CD8-positive, alpha-beta T cell (primary cell): ENCODE measurements at regions of chr5 and their contacts with region 1.

Region 1: DNA sequence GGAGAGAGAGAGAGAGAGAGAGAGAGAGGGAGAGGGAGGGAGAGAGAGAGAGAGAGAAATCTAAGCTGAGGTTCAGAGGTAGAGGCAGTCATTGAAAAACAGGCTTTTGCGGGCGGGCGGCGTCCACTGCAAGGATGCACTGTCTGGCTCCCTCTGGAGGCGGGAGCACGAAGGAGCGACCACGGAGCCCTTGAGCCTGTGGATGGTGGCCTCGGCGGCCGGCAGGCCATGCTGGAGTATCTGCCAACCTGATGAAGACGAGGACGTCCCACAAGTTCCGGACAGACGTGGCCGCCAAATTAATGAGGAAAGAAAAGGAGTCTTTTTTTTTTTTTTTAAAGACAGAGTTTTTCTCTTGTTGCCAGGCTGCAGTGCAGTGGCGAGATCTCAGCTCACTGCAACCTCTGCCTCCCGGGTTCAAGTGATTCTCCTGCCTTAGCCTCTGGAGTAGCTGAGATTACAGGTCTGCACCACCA is 2.2 kb upstream of the CCDC125 start:
- DNase-seq: peak; percentile 48 to 83 (median 74)
- ATAC-seq: peak; percentile 71
- H3K4me3 ChIP-seq: no peak overlapping the region
- H3K4me3 Mint-ChIP-seq: no peak overlapping the region
- H3K27ac ChIP-seq: no peak overlapping the region
- H3K27ac Mint-ChIP-seq: peak overlapping the region; percentile 35
- H3K4me1 ChIP-seq: peaks cover 22% of the 10 kb centered on the region
- H3K4me1 Mint-ChIP-seq: peaks cover 23% of the 10 kb centered on the region
- H3K27me3 ChIP-seq: no peaks in the 10 kb centered on the region
- H3K27me3 Mint-ChIP-seq: no peaks in the 10 kb centered on the region
- CTCF ChIP-seq: peak; percentile 72

Region 2: DNA sequence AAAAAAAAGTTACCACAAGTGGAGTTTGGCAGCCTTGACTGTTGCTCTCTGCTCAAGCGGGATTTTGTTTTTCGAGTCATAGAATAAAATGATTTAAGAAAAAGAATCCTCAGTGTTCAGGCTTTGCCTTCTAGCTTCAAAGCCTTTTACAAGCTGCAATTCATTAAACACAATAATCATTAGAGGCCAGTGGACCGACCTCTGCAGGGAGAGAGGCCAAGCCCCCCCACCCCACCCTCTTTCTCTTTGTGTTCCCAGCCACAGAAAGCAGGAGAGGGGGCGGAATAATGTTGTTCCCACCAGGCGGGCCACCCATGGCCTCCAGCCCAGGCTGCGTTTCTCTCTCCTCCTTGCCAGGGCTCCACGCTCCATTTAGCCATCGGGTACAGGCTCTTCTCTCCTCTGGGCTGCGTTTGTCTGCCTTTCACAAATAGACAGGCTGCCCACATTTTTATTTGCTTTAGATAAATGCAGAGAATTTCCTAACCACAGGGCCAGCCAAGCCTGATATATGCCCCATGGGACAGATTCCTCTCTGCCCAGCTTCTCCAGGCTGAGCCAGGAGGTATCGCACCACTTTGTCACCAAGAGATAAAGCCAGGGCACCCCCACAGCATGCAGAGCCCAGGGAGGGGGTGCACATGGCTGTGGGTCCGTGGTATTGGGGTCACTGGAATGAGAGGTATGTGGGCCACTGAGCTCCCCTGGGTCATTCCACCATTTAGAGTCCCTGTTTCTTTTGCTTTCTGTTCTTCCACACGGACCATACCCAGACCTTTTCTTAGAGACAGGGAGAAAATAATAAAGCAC is 800.5 kb before region 1 on chr5:
- CTCF ChIA-PET with region 1: no interaction called
- POLR2A ChIA-PET with region 1: no interaction called
- intact Hi-C with region 1: no loop called
- DNase-seq: no peak
- ATAC-seq: no peak
- H3K4me3 ChIP-seq: no peak overlapping the region
- H3K4me3 Mint-ChIP-seq: no peak overlapping the region
- H3K27ac ChIP-seq: no peak overlapping the region
- H3K27ac Mint-ChIP-seq: no peak overlapping the region
- H3K4me1 ChIP-seq: no peaks in the 10 kb centered on the region
- H3K4me1 Mint-ChIP-seq: no peaks in the 10 kb centered on the region
- H3K27me3 ChIP-seq: peaks cover 0 to 2% of the 10 kb centered on the region in 2 experiments
- H3K27me3 Mint-ChIP-seq: peaks cover 17% of the 10 kb centered on the region
- CTCF ChIP-seq: no peak

Region 3: DNA sequence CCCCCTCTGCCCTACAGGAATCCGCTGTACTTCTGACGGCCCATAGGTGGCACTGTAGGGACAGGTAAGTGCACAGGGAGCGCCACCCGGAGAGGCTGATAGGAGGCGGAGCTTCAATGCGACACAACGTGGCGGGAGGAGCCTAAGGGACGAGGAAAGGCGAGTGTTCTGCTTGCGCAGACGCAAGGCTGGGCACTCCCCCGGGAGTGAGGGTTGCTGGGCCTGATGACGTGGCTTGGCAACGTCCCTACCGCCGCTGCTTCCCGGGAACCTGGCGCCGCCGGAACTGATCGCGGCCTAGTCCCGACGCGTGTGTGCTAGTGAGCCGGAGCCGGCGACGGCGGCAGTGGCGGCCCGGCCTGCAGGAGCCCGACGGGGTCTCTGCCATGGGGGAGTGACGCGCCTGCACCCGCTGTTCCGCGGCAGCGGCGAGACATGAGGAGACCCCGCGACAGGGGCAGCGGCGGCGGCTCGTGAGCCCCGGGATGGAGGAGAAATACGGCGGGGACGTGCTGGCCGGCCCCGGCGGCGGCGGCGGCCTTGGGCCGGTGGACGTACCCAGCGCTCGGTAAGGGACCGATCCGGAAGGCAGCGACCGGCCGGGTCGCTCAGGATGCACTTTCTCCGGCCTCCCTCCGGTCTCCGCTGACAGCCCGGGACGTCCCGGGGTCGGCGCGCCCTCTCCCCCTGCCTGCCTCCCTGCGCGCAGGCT is 240.9 kb before region 1 on chr5 and contains the start of gene SLC30A5:
- CTCF ChIA-PET with region 1: interaction called, 23 read pairs
- POLR2A ChIA-PET with region 1: interaction called, 3 read pairs
- intact Hi-C with region 1: loop called (anchors 1 to 2 kb)
- DNase-seq: peak; percentile 96 to 100 (median 98)
- ATAC-seq: peak; percentile 98
- H3K4me3 ChIP-seq: peak within 1 kb of the TSS; percentile 67 to 69
- H3K4me3 Mint-ChIP-seq: peak within 1 kb of the TSS; percentile 91
- H3K27ac ChIP-seq: peak within 1 kb of the TSS; percentile 92 to 93
- H3K27ac Mint-ChIP-seq: peak within 1 kb of the TSS; percentile 95
- H3K4me1 ChIP-seq: peaks cover 20% of the 10 kb centered on the region
- H3K4me1 Mint-ChIP-seq: peaks cover 36% of the 10 kb centered on the region
- H3K27me3 ChIP-seq: no peaks in the 10 kb centered on the region
- H3K27me3 Mint-ChIP-seq: no peaks in the 10 kb centered on the region
- CTCF ChIP-seq: peak; percentile 76
- total RNA-seq, gene SLC30A5: 14.5 to 18.5 TPM

Region 4: DNA sequence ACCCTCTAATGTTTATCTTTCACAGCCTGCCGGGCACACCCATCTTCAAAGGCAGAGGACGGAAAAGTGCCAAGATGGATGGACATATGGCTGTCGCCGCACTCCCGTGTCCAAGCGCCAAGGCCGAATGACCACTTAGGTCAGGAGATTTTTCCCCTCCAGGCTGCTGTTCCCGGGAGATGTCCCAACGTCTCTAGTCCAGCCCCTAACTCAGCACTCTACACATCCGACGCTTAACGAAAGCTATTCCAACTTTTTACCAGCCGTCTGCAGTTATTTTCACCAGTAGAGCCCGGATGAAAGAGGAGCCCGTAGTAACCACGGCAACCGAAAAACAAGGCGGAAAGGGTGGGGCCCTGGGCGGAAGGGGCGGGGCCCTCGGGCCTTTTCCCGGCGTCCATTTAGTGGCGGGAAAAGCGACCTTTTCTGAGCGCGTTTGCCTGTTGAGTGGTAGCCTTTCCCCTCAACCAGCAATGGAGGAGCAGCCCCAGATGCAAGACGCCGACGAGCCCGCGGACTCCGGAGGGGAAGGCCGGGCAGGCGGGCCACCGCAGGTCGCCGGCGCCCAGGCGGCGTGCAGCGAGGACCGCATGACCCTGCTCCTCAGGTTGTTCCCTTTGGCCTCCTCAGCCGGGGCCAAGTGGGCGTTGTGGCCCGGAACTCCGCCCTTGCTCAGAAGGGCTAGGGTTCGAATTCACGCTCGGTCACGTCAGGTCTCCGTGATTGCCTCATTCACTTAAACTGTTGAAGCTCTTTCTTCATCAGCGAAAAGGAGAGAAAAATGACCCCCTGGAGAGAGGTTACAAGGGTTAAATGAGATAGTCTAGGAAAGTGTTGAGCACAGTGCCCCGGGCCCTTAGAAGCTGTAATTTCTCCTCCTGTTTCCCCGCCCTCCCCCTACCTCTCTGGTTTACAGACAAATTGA is 145.4 kb before region 1 on chr5 and contains the start of gene CENPH:
- CTCF ChIA-PET with region 1: no interaction called
- POLR2A ChIA-PET with region 1: no interaction called
- intact Hi-C with region 1: loop called in 1 of 2 experiments (anchors 1 kb)
- DNase-seq: peak; percentile 82 to 93 (median 90)
- ATAC-seq: peak; percentile 94
- H3K4me3 ChIP-seq: peak within 1 kb of the TSS; percentile 75 to 77
- H3K4me3 Mint-ChIP-seq: peak within 1 kb of the TSS; percentile 91
- H3K27ac ChIP-seq: peak within 1 kb of the TSS; percentile 66 to 73
- H3K27ac Mint-ChIP-seq: peak within 1 kb of the TSS; percentile 84
- H3K4me1 ChIP-seq: peaks cover 10% of the 10 kb centered on the region
- H3K4me1 Mint-ChIP-seq: peaks cover 16% of the 10 kb centered on the region
- H3K27me3 ChIP-seq: no peaks in the 10 kb centered on the region
- H3K27me3 Mint-ChIP-seq: no peaks in the 10 kb centered on the region
- CTCF ChIP-seq: no peak
- total RNA-seq, gene CENPH: 4.1 to 4.6 TPM

Region 5: DNA sequence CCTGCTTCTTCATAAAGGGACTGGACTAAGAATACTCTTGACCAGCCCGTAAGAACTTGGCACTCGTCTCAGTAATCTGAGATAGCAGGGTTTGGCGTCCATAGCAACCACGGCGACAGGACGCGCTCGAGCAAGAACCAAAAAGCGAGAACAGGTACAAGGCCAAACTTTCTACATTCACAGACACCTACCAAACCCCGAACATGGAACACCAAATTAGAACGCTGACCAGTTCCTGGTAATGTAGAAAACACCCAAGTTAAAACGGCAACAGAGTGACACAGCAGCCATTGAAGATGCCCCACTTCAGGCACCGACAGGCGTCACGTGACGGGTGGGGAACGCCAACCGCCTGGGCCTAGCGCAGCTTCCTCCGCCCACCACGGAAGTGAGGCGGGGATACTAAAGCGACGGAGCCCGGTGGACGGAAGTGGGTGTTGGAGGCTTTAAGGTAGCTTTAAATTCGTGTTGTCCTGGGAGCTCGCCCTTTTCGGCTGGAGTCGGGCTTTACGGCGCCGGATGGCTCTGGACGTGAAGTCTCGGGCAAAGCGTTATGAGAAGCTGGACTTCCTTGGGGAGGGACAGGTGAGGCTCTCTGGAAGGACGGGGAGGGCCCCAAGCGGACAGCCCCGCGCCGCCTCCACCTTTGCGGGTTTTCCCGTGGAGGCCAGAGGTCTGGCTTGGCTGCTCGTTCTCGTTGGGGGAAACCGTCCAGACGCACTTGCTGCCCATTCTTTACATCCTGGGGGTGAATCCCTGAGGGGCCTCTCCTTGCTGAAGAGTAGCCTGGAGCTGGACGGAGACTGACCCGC is 100.2 kb before region 1 on chr5 and contains the start of gene CDK7:
- CTCF ChIA-PET with region 1: interaction called, 5 read pairs
- POLR2A ChIA-PET with region 1: interaction called, 3 read pairs
- intact Hi-C with region 1: loop called (anchors 1 to 10 kb)
- DNase-seq: peak; percentile 83 to 96 (median 92)
- ATAC-seq: peak; percentile 99
- H3K4me3 ChIP-seq: peak within 1 kb of the TSS; percentile 71 to 98
- H3K4me3 Mint-ChIP-seq: peak within 1 kb of the TSS; percentile 94
- H3K27ac ChIP-seq: peak within 1 kb of the TSS; percentile 67 to 85
- H3K27ac Mint-ChIP-seq: peak within 1 kb of the TSS; percentile 89
- H3K4me1 ChIP-seq: peaks cover 20% of the 10 kb centered on the region
- H3K4me1 Mint-ChIP-seq: peaks cover 39% of the 10 kb centered on the region
- H3K27me3 ChIP-seq: no peaks in the 10 kb centered on the region
- H3K27me3 Mint-ChIP-seq: no peaks in the 10 kb centered on the region
- CTCF ChIP-seq: no peak
- total RNA-seq, gene CDK7: 27.5 to 29.4 TPM

Region 6: GRCh38 chr5:69369369-69370121 is 34.7 kb after region 1 on chr5 and contains the starts of genes AK6, RAD17 and TAF9:
- CTCF ChIA-PET with region 1: interaction called, 3 read pairs
- POLR2A ChIA-PET with region 1: interaction called, 8 read pairs
- intact Hi-C with region 1: loop called (anchors 1 kb)
- DNase-seq: peak; percentile 82 to 96 (median 92)
- ATAC-seq: peak; percentile 90
- H3K4me3 ChIP-seq: peak within 1 kb of the TSS; percentile 77 to 95
- H3K4me3 Mint-ChIP-seq: peak within 1 kb of the TSS; percentile 93
- H3K27ac ChIP-seq: peak within 1 kb of the TSS; percentile 95 to 99
- H3K27ac Mint-ChIP-seq: peak within 1 kb of the TSS; percentile 99
- H3K4me1 ChIP-seq: peaks cover 21% of the 10 kb centered on the region
- H3K4me1 Mint-ChIP-seq: peaks cover 52% of the 10 kb centered on the region
- H3K27me3 ChIP-seq: no peaks in the 10 kb centered on the region
- H3K27me3 Mint-ChIP-seq: no peaks in the 10 kb centered on the region
- CTCF ChIP-seq: no peak
- total RNA-seq, gene AK6: 10.2 to 12.1 TPM
- total RNA-seq, gene RAD17: 19.5 to 22.2 TPM
- total RNA-seq, gene TAF9: 51.3 to 56.6 TPM

Region 7: GRCh38 chr5:69404659-69405330 is 70.0 kb after region 1 on chr5:
- CTCF ChIA-PET with region 1: no interaction called
- POLR2A ChIA-PET with region 1: no interaction called
- intact Hi-C with region 1: no loop called
- DNase-seq: no peak
- ATAC-seq: no peak
- H3K4me3 ChIP-seq: no peak overlapping the region
- H3K4me3 Mint-ChIP-seq: no peak overlapping the region
- H3K27ac ChIP-seq: no peak overlapping the region
- H3K27ac Mint-ChIP-seq: no peak overlapping the region
- H3K4me1 ChIP-seq: no peaks in the 10 kb centered on the region
- H3K4me1 Mint-ChIP-seq: no peaks in the 10 kb centered on the region
- H3K27me3 ChIP-seq: no peaks in the 10 kb centered on the region
- H3K27me3 Mint-ChIP-seq: no peaks in the 10 kb centered on the region
- CTCF ChIP-seq: no peak